Mammary epithelial cell (primary cell): ENCODE measurements at regions of chr9 and their contacts with region 1.

Region 1: GRCh38 chr9:27394154-27394825 is 97.3 kb upstream of the EQTN start:
- DNase-seq: no peak
- H3K4me3 ChIP-seq: no peak overlapping the region
- H3K27ac ChIP-seq: peak overlapping the region; percentile 67
- H3K4me1 ChIP-seq: peaks cover 36% of the 10 kb centered on the region
- H3K27me3 ChIP-seq: no peaks in the 10 kb centered on the region
- CTCF ChIP-seq: no peak

Region 2: GRCh38 chr9:27355166-27355565 is 39.1 kb before region 1 on chr9:
- CTCF ChIA-PET with region 1: interaction called, 4 read pairs
- dilution Hi-C with region 1: loop called (anchors 5 kb)
- in situ Hi-C with region 1: no loop called
- intact Hi-C with region 1: no loop called
- DNase-seq: no peak
- H3K4me3 ChIP-seq: no peak overlapping the region
- H3K27ac ChIP-seq: no peak overlapping the region
- H3K4me1 ChIP-seq: no peaks in the 10 kb centered on the region
- H3K27me3 ChIP-seq: no peaks in the 10 kb centered on the region
- CTCF ChIP-seq: no peak

Region 3: DNA sequence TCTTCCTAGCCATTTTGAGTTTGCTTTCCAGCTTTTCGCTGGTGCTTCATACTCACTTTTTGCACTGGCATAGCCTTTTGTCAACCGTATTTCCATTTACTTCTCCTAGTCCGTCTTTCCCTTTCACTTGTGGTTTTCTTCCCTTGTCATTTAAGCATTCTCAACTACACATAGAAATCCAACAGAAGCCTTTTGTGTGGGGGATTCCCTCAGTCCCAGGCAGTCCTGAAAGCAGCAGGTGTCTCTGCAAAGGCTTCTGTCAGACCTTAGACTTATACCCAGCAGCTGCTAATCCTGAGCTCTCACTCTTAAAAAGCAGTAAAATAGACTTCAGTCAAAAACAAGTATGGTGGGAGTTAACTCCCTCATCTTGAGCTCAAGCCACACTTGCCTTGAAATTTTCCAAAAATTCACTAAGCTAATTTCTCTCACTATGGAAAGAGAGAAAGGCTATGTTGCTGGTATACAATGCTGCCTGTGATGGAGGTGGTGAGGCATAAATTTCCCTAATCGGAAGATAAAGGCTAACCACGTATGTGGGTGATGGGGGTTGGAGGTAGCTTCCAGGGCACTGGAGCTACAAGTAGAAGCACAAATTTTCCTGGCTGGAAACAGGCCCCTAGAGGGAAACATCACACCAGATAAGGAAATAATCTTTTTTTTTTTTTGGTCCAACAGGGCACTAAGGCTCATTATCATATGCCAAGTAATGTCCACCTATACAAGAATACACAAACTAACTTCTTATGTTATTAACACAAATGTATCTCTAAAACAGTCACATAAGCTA is 95.0 kb after region 1 on chr9:
- CTCF ChIA-PET with region 1: interaction called, 11 read pairs
- dilution Hi-C with region 1: no loop called
- in situ Hi-C with region 1: no loop called
- intact Hi-C with region 1: no loop called
- DNase-seq: no peak
- H3K4me3 ChIP-seq: no peak overlapping the region
- H3K27ac ChIP-seq: no peak overlapping the region
- H3K4me1 ChIP-seq: peaks cover 9% of the 10 kb centered on the region
- H3K27me3 ChIP-seq: no peaks in the 10 kb centered on the region
- CTCF ChIP-seq: no peak